ENCODE measurements at regions of chr12 and their contacts with region 1.

Region 1: DNA sequence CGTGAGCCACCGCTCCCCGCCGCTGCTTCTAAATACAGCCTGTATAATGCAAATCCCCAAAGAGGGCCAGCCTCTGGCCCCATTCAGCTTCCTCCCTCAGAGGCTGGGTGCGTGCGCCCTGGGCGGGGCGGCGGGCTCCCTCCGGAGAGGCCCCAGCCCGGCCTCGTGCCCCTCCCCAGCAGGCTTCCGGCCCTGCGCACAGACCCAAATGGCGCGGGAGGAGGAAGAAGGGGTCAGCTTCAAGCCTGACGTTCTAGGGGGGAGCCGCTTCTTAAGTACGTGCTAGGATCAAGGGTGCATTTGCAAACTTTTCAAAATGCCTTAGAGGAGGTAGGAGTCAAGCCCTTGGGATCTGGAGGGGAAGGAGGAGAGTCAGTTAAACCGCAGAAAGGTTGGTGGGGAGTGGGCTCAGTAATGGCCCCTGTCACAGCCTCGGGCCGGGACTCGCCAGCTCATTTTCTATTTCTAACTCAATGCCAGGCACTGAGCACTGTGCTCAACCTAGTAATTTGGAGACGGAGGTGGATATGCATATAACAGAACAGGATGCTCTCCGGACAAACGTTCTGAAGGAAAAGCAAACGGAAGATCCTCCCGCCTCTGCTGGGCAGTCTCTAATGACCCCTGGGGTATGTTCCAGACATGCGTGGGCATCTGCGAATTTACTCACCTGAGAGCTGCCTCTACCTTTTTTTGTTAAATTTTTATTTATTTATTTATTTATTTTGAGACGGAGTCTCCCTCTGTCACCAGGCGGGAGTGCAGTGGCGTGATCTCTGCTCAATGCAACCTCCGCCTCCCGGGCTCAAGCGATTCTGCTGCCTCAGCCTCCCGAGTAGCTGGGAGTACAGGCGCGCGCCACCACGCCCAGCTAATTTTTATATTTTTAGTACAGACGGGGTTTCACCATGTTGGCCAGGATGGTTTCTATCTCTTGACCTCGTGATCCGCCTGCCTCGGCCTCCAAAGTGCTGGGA is 32.3 kb downstream of the NINJ2 start:
- DNase-seq: no peak
- ATAC-seq: peak; percentile 98
- H3K4me3 ChIP-seq: peak overlapping the region; percentile 60
- H3K27ac ChIP-seq: peak overlapping the region; percentile 92
- H3K4me1 ChIP-seq: peaks cover 16% of the 10 kb centered on the region
- H3K27me3 ChIP-seq: no peaks in the 10 kb centered on the region
- CTCF ChIP-seq: no peak
- EP300 ChIP-seq: no peak
- POLR2A ChIP-seq: peak; percentile 86
- RAD21 ChIP-seq: no peak

Region 2: DNA sequence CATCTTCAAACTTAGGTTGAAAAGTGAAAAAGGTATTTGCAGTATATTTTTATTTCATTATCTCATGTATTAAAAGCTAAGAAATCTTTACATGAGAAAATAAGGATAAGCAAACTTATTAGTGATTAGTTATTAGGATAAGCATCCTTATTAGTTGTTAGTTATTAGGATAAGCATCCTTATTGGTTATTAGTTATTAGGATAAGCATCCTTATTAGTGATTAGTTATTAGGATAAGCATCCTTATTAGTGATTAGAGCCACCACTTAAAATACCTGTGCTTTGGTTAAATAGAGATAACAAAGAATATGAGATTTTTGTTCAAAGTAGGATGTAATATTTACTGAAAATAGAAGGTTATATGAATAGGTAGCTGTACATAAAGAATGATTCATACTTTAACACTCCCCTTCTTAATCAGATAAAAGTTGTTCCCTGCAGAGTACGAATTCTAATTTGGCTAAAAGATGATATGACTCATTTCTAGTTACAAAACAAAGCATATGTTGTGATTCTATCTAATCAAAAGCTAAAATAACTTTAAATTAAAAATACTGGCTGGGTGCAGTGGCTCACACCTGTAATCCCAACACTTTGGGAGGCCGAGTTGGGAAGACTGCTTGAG is 298.3 kb before region 1 on chr12:
- CTCF ChIA-PET with region 1: no interaction called
- POLR2A ChIA-PET with region 1: no interaction called
- RAD21 ChIA-PET with region 1: no interaction called
- SMC1A ChIA-PET with region 1: no interaction called
- in situ Hi-C with region 1: no loop called
- intact Hi-C with region 1: no loop called
- DNase-seq: no peak
- ATAC-seq: no peak
- H3K4me3 ChIP-seq: no peak overlapping the region
- H3K27ac ChIP-seq: no peak overlapping the region
- H3K4me1 ChIP-seq: no peaks in the 10 kb centered on the region
- H3K27me3 ChIP-seq: no peaks in the 10 kb centered on the region
- CTCF ChIP-seq: no peak
- EP300 ChIP-seq: no peak
- POLR2A ChIP-seq: no peak
- RAD21 ChIP-seq: no peak

Region 3: DNA sequence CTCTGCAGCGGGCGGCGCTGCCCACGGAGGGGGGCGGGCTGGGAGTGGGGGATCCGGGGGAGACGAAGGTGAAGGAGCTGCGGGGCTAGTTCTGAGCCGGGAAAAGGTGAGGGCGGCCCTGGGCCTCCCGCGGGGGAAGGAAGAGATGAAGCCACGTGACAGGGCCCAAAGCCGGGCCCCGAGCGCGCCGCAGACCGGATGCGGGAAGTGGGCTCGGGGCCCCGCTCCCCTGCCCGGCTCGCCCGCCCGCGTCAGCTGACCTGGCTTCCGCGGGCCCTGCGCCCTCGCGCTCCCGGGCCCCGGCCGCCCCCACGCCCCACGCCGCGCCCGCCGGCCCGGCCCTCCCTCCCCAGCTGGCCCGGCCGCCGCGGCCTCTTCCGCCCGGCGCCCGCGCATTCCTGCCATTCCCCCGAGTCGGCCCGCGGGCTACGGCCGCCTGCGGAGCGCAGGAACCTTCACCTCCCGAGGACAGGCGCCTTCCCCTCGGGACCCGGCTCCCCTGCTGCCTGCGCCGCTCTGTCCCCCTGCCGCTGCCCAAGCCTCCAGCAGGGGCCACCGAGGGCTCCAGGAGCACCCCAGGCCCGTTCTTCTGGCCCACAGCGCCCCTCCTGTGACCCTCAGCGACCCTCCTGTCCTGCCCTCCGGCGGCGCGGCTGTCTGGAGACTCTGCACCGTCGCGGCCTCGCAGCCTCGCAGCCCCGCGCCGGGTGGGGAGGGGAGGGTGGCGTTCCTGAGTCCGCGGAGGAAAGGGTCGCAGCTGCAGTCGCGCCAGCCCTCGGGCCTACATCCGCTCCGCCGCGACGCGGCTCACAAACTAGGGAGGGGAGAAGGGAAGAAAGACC is 11.9 kb after region 1 on chr12:
- CTCF ChIA-PET with region 1: interaction called, 4 read pairs
- POLR2A ChIA-PET with region 1: interaction called, 13 read pairs
- RAD21 ChIA-PET with region 1: interaction called, 9 read pairs
- SMC1A ChIA-PET with region 1: interaction called, 12 read pairs
- in situ Hi-C with region 1: no loop called
- intact Hi-C with region 1: no loop called
- DNase-seq: no peak
- ATAC-seq: peak; percentile 82
- H3K4me3 ChIP-seq: peak overlapping the region; percentile 82
- H3K27ac ChIP-seq: peak overlapping the region; percentile 86
- H3K4me1 ChIP-seq: peaks cover 57% of the 10 kb centered on the region
- H3K27me3 ChIP-seq: no peaks in the 10 kb centered on the region
- CTCF ChIP-seq: peak; percentile 20 to 68 (median 34)
- EP300 ChIP-seq: 0 out of 4 replicates have a peak, but pooled peaks of 1 of the 2 experiments have one; percentile 11
- POLR2A ChIP-seq: peak; percentile 83
- RAD21 ChIP-seq: peak; percentile 21